Endothelial cell of umbilical vein (primary cell): ENCODE measurements at regions of chr3 and their contacts with region 1.

Region 1: DNA sequence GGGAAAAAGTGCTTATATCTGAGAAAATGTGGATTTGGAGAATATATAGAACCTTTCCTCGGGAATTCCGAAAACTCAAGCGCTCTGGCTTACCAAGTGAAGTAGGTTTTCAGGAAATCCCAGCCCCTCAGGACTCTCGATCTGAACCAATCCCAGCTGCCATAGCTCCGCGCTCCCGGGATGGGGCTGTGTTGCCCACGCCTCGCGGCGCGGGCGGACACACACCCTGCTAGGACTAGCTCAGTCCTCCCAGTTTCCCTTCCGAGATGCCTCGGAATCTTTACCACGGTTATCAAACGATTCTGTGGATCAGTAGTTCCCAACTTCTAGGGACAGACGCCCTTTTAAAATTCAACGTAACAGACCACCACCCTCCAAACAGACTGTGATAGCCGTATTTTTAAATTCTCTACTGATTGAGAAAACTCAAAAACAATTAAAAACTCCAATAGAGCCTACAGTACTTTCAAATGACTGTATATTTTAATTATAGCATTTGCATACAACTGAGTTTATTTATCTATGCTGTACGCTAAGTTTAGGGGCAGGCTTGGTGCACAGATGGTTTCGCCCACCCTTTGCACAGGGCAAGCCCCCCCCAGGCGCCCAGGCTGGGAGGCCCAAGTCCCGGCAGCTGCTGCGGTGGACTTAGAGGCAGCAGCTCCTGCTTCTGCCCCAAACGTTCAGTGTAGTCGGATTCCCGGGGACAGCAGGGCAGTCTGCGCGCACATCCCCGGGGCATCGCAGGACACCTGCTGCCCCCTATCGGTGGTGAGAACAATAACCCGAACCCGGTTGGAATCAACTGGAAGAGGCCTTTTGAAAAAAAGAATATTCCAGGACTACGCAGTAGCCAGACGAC is 52.3 kb downstream of the CCDC54 start:
- DNase-seq: peak; percentile 83
- H3K4me3 ChIP-seq: peak overlapping the region; percentile 21 to 75 (median 32)
- H3K27ac ChIP-seq: no peak overlapping the region
- H3K4me1 ChIP-seq: peaks cover 20% of the 10 kb centered on the region
- H3K27me3 ChIP-seq: peaks cover 0 to 3% of the 10 kb centered on the region in 2 experiments
- CTCF ChIP-seq: peak; percentile 90 to 92
- POLR2A ChIP-seq: no peak

Region 2: GRCh38 chr3:107271787-107272387 is 157.7 kb before region 1 on chr3:
- CTCF ChIA-PET with region 1: interaction called, 77 read pairs
- POLR2A ChIA-PET with region 1: no interaction called
- dilution Hi-C with region 1: no loop called
- intact Hi-C with region 1: loop called (anchors 1 kb)
- DNase-seq: peak; percentile 36
- H3K4me3 ChIP-seq: no peak overlapping the region
- H3K27ac ChIP-seq: no peak overlapping the region
- H3K4me1 ChIP-seq: no peaks in the 10 kb centered on the region
- H3K27me3 ChIP-seq: peaks cover 4 to 23% of the 10 kb centered on the region in 2 experiments
- CTCF ChIP-seq: peak; percentile 30 to 33
- POLR2A ChIP-seq: no peak

Region 3: DNA sequence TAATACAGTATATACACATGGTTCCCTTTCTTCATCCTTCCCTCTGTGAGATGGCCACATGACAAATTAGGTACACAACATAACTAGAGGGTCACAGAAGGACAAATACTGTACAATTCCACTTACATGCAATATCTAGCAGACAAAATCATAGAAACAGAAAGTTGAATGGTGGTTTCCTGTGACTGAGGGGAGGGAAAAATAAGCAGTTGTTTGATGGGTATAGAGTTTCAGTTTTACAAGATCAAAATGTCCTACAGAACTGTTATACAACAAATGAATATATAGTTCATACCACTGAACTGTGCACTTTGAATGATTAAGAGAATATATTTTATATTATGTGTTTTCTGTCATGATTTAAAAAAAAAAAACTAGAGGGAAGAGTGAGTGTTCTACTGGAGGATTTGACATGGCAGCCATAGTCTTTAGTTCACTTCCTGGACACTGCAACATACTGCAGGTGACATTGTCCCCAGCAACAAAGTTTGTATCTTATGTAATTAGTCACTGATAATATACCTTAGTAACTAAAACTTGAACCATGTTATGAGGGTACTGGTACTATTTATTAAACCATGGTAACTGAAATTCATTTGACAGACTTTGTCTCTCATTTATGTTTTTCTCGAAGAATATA is 15.1 kb before region 1 on chr3:
- CTCF ChIA-PET with region 1: interaction called, 19 read pairs
- POLR2A ChIA-PET with region 1: no interaction called
- dilution Hi-C with region 1: no loop called
- intact Hi-C with region 1: no loop called
- DNase-seq: no peak
- H3K4me3 ChIP-seq: no peak overlapping the region
- H3K27ac ChIP-seq: no peak overlapping the region
- H3K4me1 ChIP-seq: no peaks in the 10 kb centered on the region
- H3K27me3 ChIP-seq: peaks cover 0 to 4% of the 10 kb centered on the region in 2 experiments
- CTCF ChIP-seq: no peak
- POLR2A ChIP-seq: no peak